Lower leg skin (tissue), 4 donors: ENCODE measurements at regions of chr17 and their contacts with region 1.

Region 1: DNA sequence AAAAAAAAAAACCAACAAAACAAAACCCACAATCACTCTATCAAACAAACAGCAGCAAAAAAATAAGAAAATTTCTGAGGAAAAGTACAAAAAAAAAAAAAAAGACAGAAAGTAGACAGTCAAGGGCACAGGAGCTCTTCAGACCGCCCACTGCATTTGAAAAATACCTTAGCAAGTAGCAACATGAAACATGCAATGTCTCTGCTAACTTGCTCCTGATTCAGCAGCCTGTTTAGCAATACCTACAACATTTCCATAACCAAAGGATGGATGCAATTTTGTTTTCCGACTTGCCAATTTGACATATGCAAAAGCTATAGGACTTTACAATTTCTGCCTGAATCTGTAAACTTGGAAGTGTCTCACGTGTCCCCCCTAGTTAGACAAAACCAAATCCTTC is 57.4 kb downstream of the SYNRG start:
- DNase-seq: no peak
- H3K4me3 ChIP-seq: no peak overlapping the region
- CTCF ChIP-seq: no peak
- POLR2A ChIP-seq: no peak

Region 2: GRCh38 chr17:37239690-37240334 is 312.0 kb before region 1 on chr17:
- intact Hi-C with region 1: no loop called
- DNase-seq: no peak
- H3K4me3 ChIP-seq: no peak overlapping the region
- CTCF ChIP-seq: no peak
- POLR2A ChIP-seq: no peak

Region 3: DNA sequence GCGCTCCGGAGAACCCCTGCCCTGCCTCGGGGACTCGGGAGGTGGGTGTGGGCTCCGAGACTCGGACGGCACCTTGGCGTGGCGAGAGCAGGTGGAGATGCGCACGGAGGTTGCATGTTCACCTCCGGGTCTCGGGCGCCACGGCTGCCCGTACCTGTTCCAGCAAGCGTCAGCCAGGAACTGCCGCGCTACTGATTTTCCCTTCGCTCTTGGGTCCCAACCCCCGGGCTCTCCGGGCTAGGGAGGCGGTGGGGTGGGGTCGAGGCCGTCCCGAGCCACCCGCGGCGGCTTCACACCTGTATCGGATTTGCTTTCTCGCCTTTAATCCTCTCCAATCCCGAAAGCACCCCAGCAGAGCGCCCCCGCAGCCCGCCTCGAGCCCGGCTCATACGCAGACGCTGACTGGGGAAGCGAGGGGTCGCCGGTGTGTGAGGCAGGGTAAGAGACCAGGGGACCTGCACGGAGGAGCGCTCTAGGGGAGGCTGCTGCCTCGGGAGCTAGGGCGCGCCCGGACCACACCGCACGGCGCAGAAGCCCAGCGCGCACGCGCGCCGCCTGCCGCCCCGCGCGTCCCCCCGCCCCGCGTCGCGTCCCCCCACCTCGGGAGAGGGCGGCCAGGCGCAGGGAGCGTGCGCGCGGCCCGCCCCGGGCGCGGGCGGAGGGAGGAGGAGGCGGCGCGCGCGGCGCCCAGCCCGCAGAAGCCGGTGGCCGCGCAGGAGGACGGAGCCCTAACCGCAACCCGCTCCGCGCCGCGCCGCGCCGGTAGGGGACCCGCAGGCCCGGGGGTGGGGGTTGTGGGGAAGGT is 62.4 kb before region 1 on chr17 and contains the start of gene DUSP14:
- intact Hi-C with region 1: loop called (anchors 10 kb)
- DNase-seq: peak; percentile 60 to 95
- H3K4me3 ChIP-seq: peak within 1 kb of the TSS; percentile 74
- CTCF ChIP-seq: no peak
- POLR2A ChIP-seq: no peak
- total RNA-seq, gene DUSP14: 76.5 to 133 (median 115) TPM